ENCODE measurements at regions of chr13 and their contacts with region 1.

Region 1: GRCh38 chr13:26719356-26719945 is 41.1 kb downstream of the GPR12 start:
- DNase-seq: peak; percentile 4
- ATAC-seq: peak; percentile 46
- H3K4me3 ChIP-seq: no peak overlapping the region
- H3K27ac ChIP-seq: no peak overlapping the region
- H3K4me1 ChIP-seq: no peaks in the 10 kb centered on the region
- H3K27me3 ChIP-seq: peaks cover 10% of the 10 kb centered on the region
- CTCF ChIP-seq: 0 out of 2 replicates have a peak, but pooled peaks have one; percentile 18
- POLR2A ChIP-seq: no peak
- RAD21 ChIP-seq: no peak

Region 2: GRCh38 chr13:26855921-26856320 is 136.5 kb after region 1 on chr13:
- CTCF ChIA-PET with region 1: no interaction called
- POLR2A ChIA-PET with region 1: no interaction called
- dilution Hi-C with region 1: no loop called
- in situ Hi-C with region 1: no loop called
- intact Hi-C with region 1: no loop called
- DNase-seq: no peak
- ATAC-seq: no peak
- H3K4me3 ChIP-seq: no peak overlapping the region
- H3K27ac ChIP-seq: no peak overlapping the region
- H3K4me1 ChIP-seq: no peaks in the 10 kb centered on the region
- H3K27me3 ChIP-seq: no peaks in the 10 kb centered on the region; the same call in 1 of the 2 replicates
- CTCF ChIP-seq: no peak
- POLR2A ChIP-seq: no peak
- RAD21 ChIP-seq: no peak

Region 3: DNA sequence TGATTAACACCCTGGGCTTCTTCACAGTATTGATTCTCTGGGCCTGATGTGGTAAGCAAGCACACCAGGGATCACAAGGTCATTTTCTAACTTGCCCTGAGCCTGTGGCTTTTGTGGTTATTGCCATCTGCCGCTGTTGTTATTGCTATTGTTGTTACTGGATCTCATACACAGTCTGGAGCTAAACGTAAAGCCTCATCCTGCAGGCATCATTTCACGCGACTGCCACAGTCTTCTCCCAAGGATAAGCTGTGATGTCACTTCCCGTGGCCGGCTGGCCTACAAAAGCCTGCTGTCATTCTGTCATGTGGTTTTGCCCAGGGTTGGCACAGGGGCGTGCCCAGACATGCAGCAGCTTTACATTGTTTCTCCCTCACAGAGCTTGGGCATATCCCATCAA is 195.2 kb after region 1 on chr13:
- CTCF ChIA-PET with region 1: no interaction called
- POLR2A ChIA-PET with region 1: no interaction called
- dilution Hi-C with region 1: no loop called
- in situ Hi-C with region 1: loop called (anchors 10 kb)
- intact Hi-C with region 1: no loop called
- DNase-seq: no peak
- ATAC-seq: no peak
- H3K4me3 ChIP-seq: no peak overlapping the region
- H3K27ac ChIP-seq: no peak overlapping the region
- H3K4me1 ChIP-seq: no peaks in the 10 kb centered on the region
- H3K27me3 ChIP-seq: peaks cover 31% of the 10 kb centered on the region
- CTCF ChIP-seq: no peak
- POLR2A ChIP-seq: no peak
- RAD21 ChIP-seq: no peak

Measured in IMR-90 (cell line).